Endothelial cell of umbilical vein (primary cell): ENCODE measurements at regions of chr19 and their contacts with region 1.

Region 1: DNA sequence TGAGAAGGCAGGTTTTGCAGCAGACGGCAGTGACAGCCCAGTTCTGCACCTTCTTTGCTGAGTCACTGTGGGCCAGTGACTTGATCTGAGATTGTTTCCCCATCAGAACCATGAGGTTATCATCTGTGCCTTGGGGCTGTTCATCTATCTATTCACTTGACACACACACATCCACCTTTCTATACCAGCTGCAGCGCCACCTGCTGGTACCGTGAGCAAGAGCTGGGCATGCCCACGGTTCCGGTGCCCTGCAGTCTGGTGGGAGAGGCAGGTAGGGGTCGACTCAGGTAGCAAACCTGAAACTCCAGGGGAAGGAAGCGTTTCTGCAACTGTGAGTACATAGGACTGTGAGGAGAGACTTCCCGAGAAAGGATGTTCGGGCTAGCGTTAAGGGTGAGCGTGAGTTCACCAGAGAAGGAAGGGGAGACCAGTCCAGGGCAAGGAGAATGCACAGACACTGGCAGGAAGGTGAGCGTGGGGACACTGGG is 7.5 kb upstream of the LIN7B start:
- DNase-seq: peak; percentile 45
- H3K4me3 ChIP-seq: no peak overlapping the region
- H3K27ac ChIP-seq: no peak overlapping the region
- H3K4me1 ChIP-seq: no peaks in the 10 kb centered on the region
- H3K27me3 ChIP-seq: no peaks in the 10 kb centered on the region
- CTCF ChIP-seq: peak; percentile 82 to 84
- POLR2A ChIP-seq: no peak

Region 2: GRCh38 chr19:49042177-49042576 is 64.5 kb before region 1 on chr19:
- CTCF ChIA-PET with region 1: no interaction called
- POLR2A ChIA-PET with region 1: no interaction called
- dilution Hi-C with region 1: no loop called
- intact Hi-C with region 1: no loop called
- DNase-seq: no peak
- H3K4me3 ChIP-seq: no peak overlapping the region
- H3K27ac ChIP-seq: no peak overlapping the region
- H3K4me1 ChIP-seq: no peaks in the 10 kb centered on the region
- H3K27me3 ChIP-seq: no peaks in the 10 kb centered on the region
- CTCF ChIP-seq: no peak
- POLR2A ChIP-seq: no peak

Region 3: GRCh38 chr19:49210108-49210900 is 103.6 kb after region 1 on chr19:
- CTCF ChIA-PET with region 1: interaction called, 21 read pairs
- POLR2A ChIA-PET with region 1: no interaction called
- dilution Hi-C with region 1: no loop called
- intact Hi-C with region 1: no loop called
- DNase-seq: peak; percentile 9
- H3K4me3 ChIP-seq: no peak overlapping the region
- H3K27ac ChIP-seq: no peak overlapping the region
- H3K4me1 ChIP-seq: no peaks in the 10 kb centered on the region
- H3K27me3 ChIP-seq: no peaks in the 10 kb centered on the region
- CTCF ChIP-seq: no peak
- POLR2A ChIP-seq: no peak